ENCODE measurements at regions of chr5 and their contacts with region 1.

Region 1: GRCh38 chr5:159316519-159317383 is 13.5 kb downstream of the IL12B start:
- DNase-seq: peak; percentile 39
- H3K4me3 ChIP-seq: no peak overlapping the region
- H3K27ac ChIP-seq: no peak overlapping the region
- H3K4me1 ChIP-seq: no peaks in the 10 kb centered on the region
- H3K27me3 ChIP-seq: no peaks in the 10 kb centered on the region
- CTCF ChIP-seq: peak; percentile 90 to 91

Region 2: DNA sequence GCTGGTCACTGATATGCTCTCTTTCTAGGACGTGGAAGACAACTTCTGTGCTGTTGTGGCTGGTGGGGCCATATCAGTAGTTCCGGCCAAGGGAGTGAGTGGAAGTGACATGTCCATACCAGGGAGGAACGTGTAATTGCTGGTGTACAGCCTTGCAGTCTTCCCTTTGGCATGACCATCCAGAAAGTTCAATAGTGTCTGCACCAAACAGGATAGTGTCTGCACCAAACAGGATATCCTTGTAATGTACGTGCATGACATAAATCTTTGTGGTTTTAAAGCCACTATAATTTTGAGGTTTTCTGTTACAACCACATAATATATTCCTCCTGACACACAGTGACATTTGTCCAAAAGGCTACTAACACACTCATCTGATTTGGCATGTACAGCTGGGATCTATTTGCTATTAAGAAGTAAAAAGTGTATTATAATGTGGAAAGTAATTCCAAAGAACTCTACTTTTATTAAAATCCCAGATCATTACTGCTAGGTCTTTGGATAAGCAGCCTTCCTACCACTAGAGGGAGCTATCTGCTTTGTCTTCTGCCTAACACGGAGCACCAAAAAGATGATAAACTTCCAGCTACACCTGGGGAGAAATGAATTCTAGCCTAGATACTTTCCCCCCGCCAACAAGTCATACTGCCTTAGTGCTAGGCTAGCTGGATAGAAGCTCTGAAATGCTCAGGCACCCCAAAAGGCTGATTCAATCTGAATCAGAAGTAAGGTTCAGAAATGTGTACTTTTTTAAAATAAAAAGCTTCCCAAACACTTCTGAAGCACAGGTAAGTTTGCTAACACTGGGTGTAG is 160.1 kb before region 1 on chr5:
- CTCF ChIA-PET with region 1: interaction called, 16 read pairs
- dilution Hi-C with region 1: no loop called
- in situ Hi-C with region 1: no loop called
- intact Hi-C with region 1: loop called (anchors 1 kb)
- DNase-seq: peak; percentile 65
- H3K4me3 ChIP-seq: no peak overlapping the region
- H3K27ac ChIP-seq: no peak overlapping the region
- H3K4me1 ChIP-seq: peaks cover under 1% of the 10 kb centered on the region
- H3K27me3 ChIP-seq: no peaks in the 10 kb centered on the region
- CTCF ChIP-seq: peak; percentile 84 to 87

Region 3: GRCh38 chr5:159178978-159179377 is 137.8 kb before region 1 on chr5:
- CTCF ChIA-PET with region 1: no interaction called
- dilution Hi-C with region 1: no loop called
- in situ Hi-C with region 1: no loop called
- intact Hi-C with region 1: no loop called
- DNase-seq: peak; percentile 96
- H3K4me3 ChIP-seq: no peak overlapping the region
- H3K27ac ChIP-seq: peak overlapping the region; percentile 99
- H3K4me1 ChIP-seq: peaks cover 39% of the 10 kb centered on the region
- H3K27me3 ChIP-seq: no peaks in the 10 kb centered on the region
- CTCF ChIP-seq: no peak

Region 4: GRCh38 chr5:159209438-159210305 is 107.1 kb before region 1 on chr5 and contains the start of gene RNF145:
- CTCF ChIA-PET with region 1: no interaction called
- dilution Hi-C with region 1: no loop called
- in situ Hi-C with region 1: no loop called
- intact Hi-C with region 1: no loop called
- DNase-seq: peak; percentile 91
- H3K4me3 ChIP-seq: peak within 1 kb of the TSS; percentile 77 to 89 (median 79)
- H3K27ac ChIP-seq: peak within 1 kb of the TSS; percentile 90
- H3K4me1 ChIP-seq: peaks cover 20% of the 10 kb centered on the region
- H3K27me3 ChIP-seq: no peaks in the 10 kb centered on the region
- CTCF ChIP-seq: no peak
- total RNA-seq, gene RNF145: 63.2 to 78.9 TPM

Region 5: DNA sequence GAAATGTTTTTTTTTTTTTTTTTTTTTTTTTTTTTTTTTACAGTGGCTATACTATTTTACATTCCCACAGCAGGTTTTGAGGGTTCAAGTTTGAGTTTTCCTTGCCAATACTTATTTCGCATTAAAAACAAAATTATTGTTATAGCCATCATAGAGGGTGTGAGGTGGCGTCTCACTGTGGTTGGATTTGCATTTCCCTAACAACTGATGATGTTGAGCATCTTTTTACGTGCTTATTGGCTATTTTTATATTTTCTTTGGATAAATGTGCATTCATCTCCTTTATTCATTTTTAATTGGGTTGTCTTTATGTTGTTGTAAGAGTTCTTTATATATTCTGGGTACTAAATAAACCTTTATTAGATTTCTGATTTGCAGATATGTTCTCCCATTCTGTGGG is 72.6 kb before region 1 on chr5:
- CTCF ChIA-PET with region 1: no interaction called
- dilution Hi-C with region 1: no loop called
- in situ Hi-C with region 1: no loop called
- intact Hi-C with region 1: no loop called
- DNase-seq: no peak
- H3K4me3 ChIP-seq: no peak overlapping the region
- H3K27ac ChIP-seq: no peak overlapping the region
- H3K4me1 ChIP-seq: peaks cover 20% of the 10 kb centered on the region
- H3K27me3 ChIP-seq: no peaks in the 10 kb centered on the region
- CTCF ChIP-seq: no peak

Region 6: GRCh38 chr5:159286420-159287035 is 30.2 kb before region 1 on chr5:
- CTCF ChIA-PET with region 1: interaction called, 12 read pairs
- dilution Hi-C with region 1: no loop called
- in situ Hi-C with region 1: no loop called
- intact Hi-C with region 1: loop called (anchors 1 kb)
- DNase-seq: peak; percentile 35
- H3K4me3 ChIP-seq: no peak overlapping the region
- H3K27ac ChIP-seq: no peak overlapping the region
- H3K4me1 ChIP-seq: no peaks in the 10 kb centered on the region
- H3K27me3 ChIP-seq: no peaks in the 10 kb centered on the region
- CTCF ChIP-seq: peak; percentile 30 to 57

Region 7: GRCh38 chr5:159489779-159490178 is 173.0 kb after region 1 on chr5:
- CTCF ChIA-PET with region 1: no interaction called
- dilution Hi-C with region 1: no loop called
- in situ Hi-C with region 1: no loop called
- intact Hi-C with region 1: no loop called
- DNase-seq: no peak
- H3K4me3 ChIP-seq: no peak overlapping the region
- H3K27ac ChIP-seq: no peak overlapping the region
- H3K4me1 ChIP-seq: no peaks in the 10 kb centered on the region
- H3K27me3 ChIP-seq: no peaks in the 10 kb centered on the region
- CTCF ChIP-seq: no peak

Measured in mammary epithelial cell (primary cell).